Dorsolateral prefrontal cortex (tissue), 120 donors: ENCODE measurements at regions of chr19 and their contacts with region 1.

Region 1: DNA sequence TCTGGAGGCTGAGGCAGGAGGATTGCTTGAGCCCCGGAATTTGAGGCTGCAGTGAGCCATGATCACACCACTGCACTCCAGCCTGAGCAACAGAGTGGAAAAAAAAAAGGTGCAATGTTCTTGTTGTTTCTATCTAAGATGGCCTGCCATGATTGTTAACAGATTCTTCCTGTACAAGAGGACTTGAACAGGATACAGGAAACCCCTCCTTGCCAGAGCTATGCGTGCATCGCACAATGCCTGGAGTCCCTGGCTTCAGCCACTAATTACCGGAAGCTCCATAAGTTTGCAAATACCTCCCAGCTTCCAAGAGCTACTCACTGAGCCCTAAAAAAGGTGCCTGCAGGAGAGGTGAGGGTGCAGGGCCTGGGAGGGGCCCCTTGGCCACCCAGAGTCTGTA is 13.1 kb upstream of the HIF3A start:
- DNase-seq: no peak
- H3K4me3 ChIP-seq: no peak overlapping the region
- H3K27ac ChIP-seq: peak overlapping the region in 1 of 59 donors; percentile 17
- H3K27me3 ChIP-seq: no peaks in the 10 kb centered on the region
- CTCF ChIP-seq: no peak

Region 2: DNA sequence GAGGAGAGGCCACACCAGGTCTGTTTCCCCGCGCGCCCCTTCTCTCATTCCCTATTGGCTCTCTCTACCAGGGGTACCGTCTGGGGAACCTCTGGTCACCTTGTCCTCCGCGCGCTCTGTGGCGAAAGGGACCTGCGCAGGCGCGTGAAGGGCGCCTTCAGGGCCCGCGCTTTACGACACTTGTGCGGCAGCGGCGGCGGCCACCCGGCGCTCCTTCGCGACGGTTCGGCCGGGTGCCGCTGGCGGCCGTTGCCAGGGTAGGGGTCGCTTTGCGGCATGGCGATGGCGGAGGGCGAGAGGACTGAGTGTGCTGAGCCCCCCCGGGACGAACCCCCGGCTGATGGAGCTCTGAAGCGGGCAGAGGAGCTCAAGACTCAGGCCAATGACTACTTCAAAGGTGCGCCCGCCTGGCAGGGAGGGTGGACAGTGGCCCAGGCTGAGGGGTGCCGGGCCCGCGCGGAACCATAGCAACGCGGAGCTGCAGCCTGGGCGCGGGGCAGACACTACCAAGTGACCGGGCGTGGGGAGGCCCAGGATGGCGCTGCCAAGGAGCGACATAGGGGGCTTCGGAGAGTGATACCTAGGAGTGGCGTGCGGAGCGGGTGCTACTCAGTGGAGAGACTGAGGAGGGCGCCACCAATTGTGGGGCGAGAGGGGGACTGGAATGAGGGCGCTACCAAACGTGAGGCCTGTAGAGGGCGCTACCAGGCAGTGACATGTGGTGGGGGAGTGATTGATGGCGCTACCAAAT is 63.2 kb after region 1 on chr19 and contains the start of gene PPP5C:
- intact Hi-C with region 1: loop called (anchors 2 to 10 kb)
- DNase-seq: peak; percentile 70 to 93 (median 84)
- H3K4me3 ChIP-seq: peak within 1 kb of the TSS; percentile 70 to 100 (median 96)
- H3K27ac ChIP-seq: peak within 1 kb of the TSS in 57 of 59 donors; percentile 30 to 95 (median 84)
- H3K27me3 ChIP-seq: no peaks in the 10 kb centered on the region
- CTCF ChIP-seq: peak in 51 of 56 donors; percentile 20 to 72 (median 48)
- total RNA-seq, gene PPP5C: 63.9 to 137 (median 98.8) TPM

Region 3: DNA sequence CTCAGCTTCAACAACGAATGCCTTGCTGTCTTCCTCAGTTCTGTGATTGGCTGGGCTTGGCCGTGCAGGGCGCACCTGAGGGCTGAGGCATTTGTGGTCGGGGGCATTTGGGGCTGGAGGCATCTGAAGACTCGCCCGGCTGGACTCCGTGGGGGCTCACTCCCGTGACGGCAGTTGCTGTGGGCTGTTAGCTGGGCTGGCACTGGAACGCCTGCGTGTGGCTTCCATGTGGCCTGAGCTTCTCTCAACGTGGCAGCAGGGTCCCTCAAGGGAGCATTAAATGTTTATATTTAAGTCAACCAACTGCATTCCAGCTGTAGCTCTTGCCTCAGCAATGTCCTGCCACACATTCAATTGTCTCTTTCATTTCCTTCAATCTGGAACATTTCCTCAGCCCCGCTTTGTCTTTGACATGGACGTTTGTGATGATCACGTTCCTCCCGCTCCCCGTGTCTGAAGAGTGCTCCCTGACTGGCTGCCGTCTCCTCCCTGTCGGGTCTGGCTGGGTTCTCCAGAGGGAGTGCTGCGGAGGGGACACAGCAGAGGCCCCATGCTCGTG is 108.6 kb after region 1 on chr19:
- intact Hi-C with region 1: loop called (anchors 5 to 10 kb)
- DNase-seq: peak in 2 of 10 donors; percentile 43 to 47
- H3K4me3 ChIP-seq: peak overlapping the region in 1 of 59 donors; percentile 3
- H3K27ac ChIP-seq: peak overlapping the region in 50 of 59 donors; percentile 6 to 82 (median 51)
- H3K27me3 ChIP-seq: no peaks in the 10 kb centered on the region
- CTCF ChIP-seq: no peak

Region 4: DNA sequence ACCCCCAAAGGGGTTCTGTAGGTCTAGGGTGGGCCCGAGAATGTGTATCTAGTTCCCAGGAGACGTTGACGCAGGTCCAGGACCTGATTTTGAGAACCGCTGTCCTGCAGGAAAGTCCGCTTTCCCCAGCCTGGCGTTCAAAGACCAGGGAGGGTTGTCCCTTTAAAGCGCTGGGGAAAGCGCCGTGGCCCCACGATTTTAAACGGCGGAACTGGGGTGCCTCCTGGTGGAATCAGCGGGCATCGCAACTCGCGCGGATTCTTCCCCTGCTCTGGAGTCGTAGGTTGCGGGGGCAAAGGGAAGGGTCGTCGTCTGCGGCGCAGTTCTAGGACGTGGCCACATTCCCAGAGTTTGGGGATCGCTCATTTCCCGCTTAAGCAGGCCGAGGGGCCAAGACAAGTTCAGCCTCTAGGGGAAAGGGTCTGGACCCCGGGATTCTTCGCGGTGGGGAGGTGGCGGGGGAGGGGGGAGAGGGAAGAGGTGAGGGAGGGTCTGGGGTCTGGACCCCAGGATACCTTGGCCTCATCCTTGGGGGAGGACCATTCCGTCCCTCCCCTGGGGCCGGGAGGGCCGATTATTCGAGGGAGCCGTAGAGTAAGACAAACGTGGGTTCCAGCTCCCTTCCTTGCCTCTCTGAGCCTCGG is 204.2 kb after region 1 on chr19:
- intact Hi-C with region 1: loop called (anchors 5 to 10 kb)
- DNase-seq: peak; percentile 71 to 90 (median 82)
- H3K4me3 ChIP-seq: peak overlapping the region; percentile 42 to 78 (median 62)
- H3K27ac ChIP-seq: peak overlapping the region in 42 of 59 donors; percentile 6 to 86 (median 60)
- H3K27me3 ChIP-seq: peaks cover 0 to 3% (median 0%) of the 10 kb centered on the region in 45 donors
- CTCF ChIP-seq: peak; percentile 74 to 99 (median 96)

Region 5: DNA sequence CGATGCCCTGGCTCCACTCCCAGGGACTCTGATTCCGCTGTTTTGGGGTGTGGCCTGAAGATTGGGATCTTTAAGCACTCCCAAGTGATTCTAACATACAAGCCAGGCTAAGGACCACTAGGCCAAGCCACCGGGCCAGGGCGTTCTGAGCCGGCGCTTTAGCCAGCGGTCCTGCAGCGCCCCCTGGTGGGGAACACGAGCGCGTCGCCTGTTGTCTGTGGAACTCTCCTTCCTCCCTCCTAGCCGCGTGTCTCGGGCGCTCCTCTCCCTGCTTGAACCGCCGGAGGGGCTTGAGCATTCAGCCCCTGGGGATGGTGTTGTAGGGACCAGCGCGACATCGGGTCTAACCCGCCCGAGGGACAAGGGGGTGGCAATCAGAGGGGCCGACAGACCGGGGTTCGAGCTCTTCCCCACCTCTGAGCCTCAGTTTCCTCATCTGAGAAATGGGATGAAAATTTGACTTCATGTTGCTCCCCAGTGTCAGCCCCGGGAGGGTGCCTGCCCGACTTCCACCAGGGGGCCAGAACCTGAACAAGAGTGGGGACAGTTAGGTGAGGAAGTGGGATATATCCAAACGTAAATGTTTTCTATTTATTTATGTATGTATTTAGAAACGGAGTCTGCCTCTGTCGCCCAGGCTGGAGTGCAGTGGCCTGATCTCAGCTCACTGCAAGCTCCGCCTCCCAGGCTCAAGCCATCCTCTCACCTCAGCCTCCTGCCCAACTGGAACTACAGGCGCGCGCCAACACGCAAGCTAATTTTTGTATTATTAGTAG is 229.9 kb after region 1 on chr19:
- intact Hi-C with region 1: loop called (anchors 5 kb)
- DNase-seq: peak; percentile 60 to 90 (median 77)
- H3K4me3 ChIP-seq: peak overlapping the region in 1 of 59 donors; percentile 11
- H3K27ac ChIP-seq: peak overlapping the region in 1 of 59 donors; percentile 28
- H3K27me3 ChIP-seq: no peaks in the 10 kb centered on the region
- CTCF ChIP-seq: peak; percentile 45 to 100 (median 98)